ENCODE measurements at regions of chr1 and their contacts with region 1.

Region 1: GRCh38 chr1:161399257-161399998 is 31.8 kb upstream of the CFAP126 start:
- DNase-seq: peak; percentile 84 to 97 (median 95)
- ATAC-seq: peak; percentile 83
- H3K4me3 ChIP-seq: peak overlapping the region; percentile 81 to 87
- H3K4me3 Mint-ChIP-seq: peak overlapping the region; percentile 96
- H3K27ac ChIP-seq: peak overlapping the region; percentile 96 to 98
- H3K27ac Mint-ChIP-seq: peak overlapping the region; percentile 98
- H3K4me1 ChIP-seq: peaks cover 19% of the 10 kb centered on the region
- H3K4me1 Mint-ChIP-seq: peaks cover 28% of the 10 kb centered on the region
- H3K27me3 ChIP-seq: no peaks in the 10 kb centered on the region
- H3K27me3 Mint-ChIP-seq: no peaks in the 10 kb centered on the region
- CTCF ChIP-seq: peak; percentile 88

Region 2: GRCh38 chr1:161153679-161154426 is 245.6 kb before region 1 on chr1 and contains the start of gene UFC1:
- CTCF ChIA-PET with region 1: no interaction called
- POLR2A ChIA-PET with region 1: interaction called, 3 read pairs
- intact Hi-C with region 1: loop called in 1 of 2 experiments (anchors 5 kb)
- DNase-seq: peak; percentile 66 to 96 (median 78)
- ATAC-seq: peak; percentile 92
- H3K4me3 ChIP-seq: peak within 1 kb of the TSS; percentile 95 to 98
- H3K4me3 Mint-ChIP-seq: peak within 1 kb of the TSS; percentile 96
- H3K27ac ChIP-seq: peak within 1 kb of the TSS; percentile 98 to 99
- H3K27ac Mint-ChIP-seq: peak within 1 kb of the TSS; percentile 100
- H3K4me1 ChIP-seq: peaks cover 17% of the 10 kb centered on the region
- H3K4me1 Mint-ChIP-seq: peaks cover 30% of the 10 kb centered on the region
- H3K27me3 ChIP-seq: no peaks in the 10 kb centered on the region
- H3K27me3 Mint-ChIP-seq: no peaks in the 10 kb centered on the region
- CTCF ChIP-seq: no peak
- total RNA-seq, gene UFC1: 94.7 to 96.6 TPM

Region 3: GRCh38 chr1:161549652-161550051 is 150.2 kb after region 1 on chr1 and contains the start of gene FCGR3A:
- CTCF ChIA-PET with region 1: no interaction called
- POLR2A ChIA-PET with region 1: no interaction called
- intact Hi-C with region 1: loop called in 1 of 2 experiments (anchors 5 kb)
- DNase-seq: peak in 1 of 9 experiments; percentile 53
- ATAC-seq: no peak
- H3K4me3 ChIP-seq: peak within 1 kb of the TSS in 1 of 2 experiments; percentile 48
- H3K4me3 Mint-ChIP-seq: peak within 1 kb of the TSS; percentile 15
- H3K27ac ChIP-seq: peak within 1 kb of the TSS in 1 of 2 experiments; percentile 85
- H3K27ac Mint-ChIP-seq: peak within 1 kb of the TSS; percentile 41
- H3K4me1 ChIP-seq: peaks cover 9% of the 10 kb centered on the region
- H3K4me1 Mint-ChIP-seq: peaks cover 20% of the 10 kb centered on the region
- H3K27me3 ChIP-seq: no peaks in the 10 kb centered on the region
- H3K27me3 Mint-ChIP-seq: no peaks in the 10 kb centered on the region
- CTCF ChIP-seq: no peak
- total RNA-seq, gene FCGR3A: 0.98 to 1.00 TPM

Region 4: GRCh38 chr1:161766102-161766981 is 366.9 kb after region 1 on chr1 and contains the start of gene ATF6:
- CTCF ChIA-PET with region 1: no interaction called
- POLR2A ChIA-PET with region 1: no interaction called
- intact Hi-C with region 1: loop called in 1 of 2 experiments (anchors 10 kb)
- DNase-seq: peak; percentile 61 to 92 (median 79)
- ATAC-seq: peak; percentile 79
- H3K4me3 ChIP-seq: peak within 1 kb of the TSS; percentile 73 to 83
- H3K4me3 Mint-ChIP-seq: peak within 1 kb of the TSS; percentile 93
- H3K27ac ChIP-seq: peak within 1 kb of the TSS; percentile 84 to 89
- H3K27ac Mint-ChIP-seq: peak within 1 kb of the TSS; percentile 95
- H3K4me1 ChIP-seq: peaks cover 45% of the 10 kb centered on the region
- H3K4me1 Mint-ChIP-seq: peaks cover 37% of the 10 kb centered on the region
- H3K27me3 ChIP-seq: no peaks in the 10 kb centered on the region
- H3K27me3 Mint-ChIP-seq: no peaks in the 10 kb centered on the region
- CTCF ChIP-seq: no peak
- total RNA-seq, gene ATF6: 10.5 to 11.6 TPM

Measured in CD8-positive, alpha-beta T cell (primary cell).